Naive thymus-derived CD8-positive, alpha-beta T cell (primary cell): ENCODE measurements at regions of chr19 and their contacts with region 1.

Region 1: GRCh38 chr19:41263850-41264580 is at the start of gene HNRNPUL1:
- DNase-seq: peak; percentile 95 to 100 (median 100)
- ATAC-seq: peak; percentile 55 to 57
- H3K4me3 Mint-ChIP-seq: peak within 1 kb of the TSS; percentile 82 to 100 (median 98)
- H3K27ac Mint-ChIP-seq: peak within 1 kb of the TSS; percentile 100
- H3K4me1 Mint-ChIP-seq: peaks cover 34 to 63% (median 48%) of the 10 kb centered on the region in 4 donors
- H3K27me3 Mint-ChIP-seq: peaks cover 0 to 9% (median 0%) of the 10 kb centered on the region in 5 donors
- polyA plus RNA-seq, gene HNRNPUL1: 40.7 to 67.6 (median 46.1) TPM

Region 2: GRCh38 chr19:40750059-40750873 is 513.7 kb before region 1 on chr19 and contains the start of gene ACTMAP:
- POLR2A ChIA-PET with region 1: interaction called, 11 read pairs
- DNase-seq: peak in 9 of 10 donors; percentile 94 to 100 (median 100)
- ATAC-seq: peak; percentile 87 to 90
- H3K4me3 Mint-ChIP-seq: peak within 1 kb of the TSS; percentile 91 to 100 (median 99)
- H3K27ac Mint-ChIP-seq: peak within 1 kb of the TSS; percentile 88 to 99 (median 99)
- H3K4me1 Mint-ChIP-seq: peaks cover 28 to 52% (median 47%) of the 10 kb centered on the region in 4 donors
- H3K27me3 Mint-ChIP-seq: no peaks in the 10 kb centered on the region
- polyA plus RNA-seq, gene ACTMAP: 2.5 to 4.6 (median 3.4) TPM

Region 3: DNA sequence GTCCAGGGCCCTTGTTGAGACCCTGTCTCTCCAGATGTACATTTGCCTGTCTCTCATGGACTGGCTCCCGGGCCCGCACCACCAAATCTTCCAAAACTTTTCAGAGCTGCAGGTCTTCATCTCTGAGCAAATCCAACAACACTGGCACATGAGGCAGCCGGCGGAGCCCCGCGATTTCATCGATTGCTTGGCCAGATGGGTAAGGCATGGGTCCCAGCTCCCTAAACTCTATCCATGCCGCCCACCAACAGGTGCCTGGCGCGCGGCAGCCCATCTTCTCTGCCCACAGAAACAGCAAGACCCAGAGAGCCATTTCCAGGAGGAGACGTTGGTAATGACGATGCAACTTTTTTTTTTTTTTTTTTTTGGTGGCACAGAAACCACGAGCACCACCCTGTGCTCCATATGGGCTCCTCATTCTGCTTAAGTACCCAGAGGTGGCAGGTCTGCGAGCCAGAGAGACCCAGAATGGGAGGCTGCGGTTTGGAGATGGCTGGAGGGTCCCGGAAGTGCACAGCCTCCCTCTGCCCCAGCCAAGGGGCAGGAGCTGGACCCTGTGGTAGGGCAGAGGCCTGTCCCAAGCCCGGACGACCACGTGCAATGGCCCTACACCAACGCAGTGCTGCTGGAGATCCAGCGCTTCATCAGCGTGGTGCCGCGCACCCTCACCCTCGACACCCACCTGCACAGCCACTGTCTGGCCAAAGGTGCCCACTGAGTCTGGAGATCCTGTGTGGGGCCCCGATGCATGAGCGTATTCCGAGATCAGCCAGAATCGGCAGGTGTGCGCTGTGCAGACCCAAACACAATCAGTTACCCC is 127.2 kb before region 1 on chr19:
- POLR2A ChIA-PET with region 1: no interaction called
- DNase-seq: no peak
- ATAC-seq: no peak
- H3K4me3 Mint-ChIP-seq: peak overlapping the region; percentile 60 to 96 (median 87)
- H3K27ac Mint-ChIP-seq: peak overlapping the region in 8 of 10 donors; percentile 8 to 94 (median 81)
- H3K4me1 Mint-ChIP-seq: peaks cover 14 to 27% (median 19%) of the 10 kb centered on the region in 4 donors
- H3K27me3 Mint-ChIP-seq: peaks cover 0 to 11% (median 6%) of the 10 kb centered on the region in 5 donors

Region 4: GRCh38 chr19:41206926-41207750 is 56.9 kb before region 1 on chr19:
- POLR2A ChIA-PET with region 1: interaction called, 41 read pairs
- DNase-seq: peak in 1 of 10 donors; percentile 56
- ATAC-seq: no peak
- H3K4me3 Mint-ChIP-seq: no peak overlapping the region
- H3K27ac Mint-ChIP-seq: peak overlapping the region in 3 of 10 donors; percentile 60 to 82 (median 78)
- H3K4me1 Mint-ChIP-seq: peaks cover 0 to 6% (median 4%) of the 10 kb centered on the region in 4 donors
- H3K27me3 Mint-ChIP-seq: peaks cover 0 to 2% (median 0%) of the 10 kb centered on the region in 5 donors

Region 5: DNA sequence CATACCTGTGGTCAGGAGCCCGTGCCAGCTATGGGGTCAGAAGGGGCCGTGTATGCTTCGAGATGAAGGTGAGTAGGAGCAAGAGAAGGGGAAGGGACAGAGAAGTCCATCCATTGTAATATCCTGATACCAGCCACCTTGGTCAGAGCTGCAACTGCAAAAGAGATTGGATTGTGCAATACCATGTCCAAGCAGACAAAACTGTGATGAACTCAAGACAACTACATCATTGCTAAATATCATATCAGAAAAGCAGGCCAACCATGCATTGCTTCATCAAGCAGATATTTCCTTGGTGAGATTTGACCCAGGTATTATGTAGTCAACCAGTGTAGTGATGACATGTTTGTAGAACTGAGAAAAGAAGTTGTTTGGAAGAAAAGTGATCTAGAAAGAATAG is 12.2 kb after region 1 on chr19:
- POLR2A ChIA-PET with region 1: interaction called, 17 read pairs
- DNase-seq: no peak
- ATAC-seq: no peak
- H3K4me3 Mint-ChIP-seq: no peak overlapping the region
- H3K27ac Mint-ChIP-seq: peak overlapping the region in 3 of 10 donors; percentile 28 to 39 (median 32)
- H3K4me1 Mint-ChIP-seq: peaks cover 0 to 17% (median 10%) of the 10 kb centered on the region in 4 donors
- H3K27me3 Mint-ChIP-seq: no peaks in the 10 kb centered on the region

Region 6: GRCh38 chr19:41327576-41328156 is 63.7 kb after region 1 on chr19:
- POLR2A ChIA-PET with region 1: interaction called, 23 read pairs
- DNase-seq: peak; percentile 60 to 90 (median 74)
- ATAC-seq: peak; percentile 62 to 75
- H3K4me3 Mint-ChIP-seq: peak overlapping the region; percentile 75 to 88 (median 82)
- H3K27ac Mint-ChIP-seq: peak overlapping the region; percentile 93 to 99 (median 98)
- H3K4me1 Mint-ChIP-seq: peaks cover 54 to 89% (median 75%) of the 10 kb centered on the region in 4 donors
- H3K27me3 Mint-ChIP-seq: peaks cover 0 to 2% (median 0%) of the 10 kb centered on the region in 5 donors

Region 7: DNA sequence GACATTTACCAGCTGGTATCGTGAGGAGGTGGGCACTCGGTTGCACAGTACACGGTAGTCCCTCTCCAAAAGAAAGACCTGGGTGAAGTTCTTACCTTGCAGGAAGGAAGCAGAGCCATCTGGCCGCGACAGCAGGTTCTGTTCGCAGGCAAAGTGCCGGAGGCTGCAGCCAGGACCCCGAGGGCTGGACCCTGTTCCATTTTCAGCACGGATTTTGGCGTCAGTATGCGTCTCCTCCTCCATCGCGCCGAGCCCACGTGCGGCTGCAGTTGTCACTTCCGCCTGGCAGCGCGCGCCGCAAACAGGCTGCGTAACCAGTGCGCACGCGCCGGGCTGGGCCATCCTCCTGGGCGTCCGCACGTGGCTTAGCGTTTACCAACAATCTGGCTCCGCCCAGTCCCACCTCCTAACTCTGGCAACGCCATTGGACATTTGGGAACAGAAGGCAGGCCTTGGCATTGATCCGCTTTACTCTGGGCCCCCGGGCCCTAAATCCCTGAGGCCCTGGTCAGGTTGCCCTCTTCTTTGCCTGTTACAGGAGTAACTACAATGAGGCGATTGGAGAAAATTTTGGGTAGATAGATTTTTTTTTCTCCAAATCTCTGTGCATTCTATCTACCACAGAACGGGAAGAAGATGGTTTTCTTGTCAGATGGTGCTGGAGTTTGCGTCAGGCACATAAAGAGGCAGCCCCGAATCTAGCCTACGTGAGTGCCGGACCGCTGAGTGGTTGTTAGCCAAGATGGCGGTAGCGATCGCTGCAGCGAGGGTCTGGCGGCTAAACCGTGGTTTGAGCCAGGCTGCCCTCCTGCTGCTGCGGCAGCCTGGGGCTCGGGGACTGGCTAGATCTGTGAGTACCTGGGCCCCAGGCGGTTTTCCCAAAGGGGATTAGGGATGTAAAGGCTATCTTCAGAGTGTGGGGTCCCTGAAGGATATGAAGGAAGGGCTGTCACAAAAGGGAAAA is 133.4 kb after region 1 on chr19 and contains the starts of genes BCKDHA and EXOSC5:
- POLR2A ChIA-PET with region 1: interaction called, 10 read pairs
- DNase-seq: peak; percentile 97 to 100 (median 99)
- ATAC-seq: peak; percentile 98
- H3K4me3 Mint-ChIP-seq: peak within 1 kb of the TSS; percentile 98 to 99 (median 98)
- H3K27ac Mint-ChIP-seq: peak within 1 kb of the TSS; percentile 99 to 100 (median 100)
- H3K4me1 Mint-ChIP-seq: peaks cover 27 to 56% (median 51%) of the 10 kb centered on the region in 4 donors
- H3K27me3 Mint-ChIP-seq: peaks cover 0 to 2% (median 0%) of the 10 kb centered on the region in 5 donors
- polyA plus RNA-seq, gene BCKDHA: 51.8 to 67.3 (median 53.8) TPM
- polyA plus RNA-seq, gene EXOSC5: 69.0 to 88.0 (median 84.8) TPM